IMR-90 (cell line): ENCODE measurements at regions of chr13 and their contacts with region 1.

Region 1: GRCh38 chr13:31733066-31733465 is 6.3 kb upstream of the RXFP2 start:
- DNase-seq: peak; percentile 40
- ATAC-seq: peak; percentile 49
- H3K4me3 ChIP-seq: 0 out of 2 replicates have a peak overlapping the region, but pooled peaks have one; percentile 10
- H3K27ac ChIP-seq: no peak overlapping the region
- H3K4me1 ChIP-seq: no peaks in the 10 kb centered on the region
- H3K27me3 ChIP-seq: peaks cover 5% of the 10 kb centered on the region; the same call in 1 of the 2 replicates
- CTCF ChIP-seq: no peak
- POLR2A ChIP-seq: no peak
- RAD21 ChIP-seq: no peak

Region 2: DNA sequence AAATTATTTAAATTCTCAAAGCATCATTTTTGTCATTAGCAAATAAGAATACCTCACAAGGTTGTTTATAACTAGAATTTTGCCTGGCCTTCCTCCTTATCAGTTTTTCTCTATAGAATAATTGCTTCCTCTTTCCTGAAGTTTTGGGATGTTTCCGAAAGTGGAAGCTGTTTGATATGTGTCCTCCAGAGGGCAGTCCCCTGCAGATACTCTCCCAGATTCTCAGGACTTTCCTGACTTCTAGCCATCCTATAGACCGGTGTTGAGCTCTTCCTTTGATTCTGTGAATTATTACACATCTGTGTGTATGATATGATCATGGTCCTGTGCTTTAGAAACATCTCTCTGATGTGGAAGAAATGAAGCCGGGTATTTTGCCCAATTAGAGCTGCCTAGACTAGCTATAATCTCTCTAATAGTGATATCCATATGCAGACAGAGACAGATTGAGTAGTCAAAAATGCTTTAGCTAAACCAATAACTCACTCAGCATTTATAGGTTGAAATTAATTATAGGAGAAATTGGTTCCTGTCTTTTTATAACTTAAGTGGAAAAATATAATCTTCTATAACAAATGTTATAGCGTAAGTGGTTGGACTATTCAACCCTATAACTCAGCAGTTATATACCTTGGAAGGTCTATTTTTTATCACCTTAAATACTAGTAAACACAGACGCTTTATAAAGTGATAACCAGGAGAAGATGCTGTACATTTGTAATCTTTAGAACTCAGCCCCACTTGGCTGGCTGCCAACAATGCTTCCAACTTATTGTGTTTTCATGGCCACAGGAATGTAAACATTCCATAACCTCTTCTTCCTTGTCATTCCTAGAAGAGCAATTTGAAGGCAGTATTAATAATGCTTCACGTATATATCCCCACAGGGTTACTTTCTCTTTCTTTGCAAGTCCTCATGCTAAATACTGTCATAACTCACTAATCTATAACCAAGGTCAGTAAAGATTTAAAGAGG is 194.7 kb before region 1 on chr13:
- CTCF ChIA-PET with region 1: no interaction called
- POLR2A ChIA-PET with region 1: no interaction called
- dilution Hi-C with region 1: no loop called
- in situ Hi-C with region 1: loop called (anchors 10 kb)
- intact Hi-C with region 1: no loop called
- DNase-seq: peak; percentile 45
- ATAC-seq: peak; percentile 87
- H3K4me3 ChIP-seq: no peak overlapping the region
- H3K27ac ChIP-seq: no peak overlapping the region
- H3K4me1 ChIP-seq: no peaks in the 10 kb centered on the region
- H3K27me3 ChIP-seq: no peaks in the 10 kb centered on the region; the same call in 1 of the 2 replicates
- CTCF ChIP-seq: peak; percentile 58
- POLR2A ChIP-seq: no peak
- RAD21 ChIP-seq: peak; percentile 62

Region 3: GRCh38 chr13:31649766-31650165 is 83.3 kb before region 1 on chr13:
- CTCF ChIA-PET with region 1: no interaction called
- POLR2A ChIA-PET with region 1: no interaction called
- dilution Hi-C with region 1: no loop called
- in situ Hi-C with region 1: no loop called
- intact Hi-C with region 1: loop called (anchors 10 kb)
- DNase-seq: no peak
- ATAC-seq: no peak
- H3K4me3 ChIP-seq: no peak overlapping the region
- H3K27ac ChIP-seq: no peak overlapping the region
- H3K4me1 ChIP-seq: no peaks in the 10 kb centered on the region
- H3K27me3 ChIP-seq: no peaks in the 10 kb centered on the region; the same call in 1 of the 2 replicates
- CTCF ChIP-seq: no peak
- POLR2A ChIP-seq: no peak
- RAD21 ChIP-seq: no peak

Region 4: DNA sequence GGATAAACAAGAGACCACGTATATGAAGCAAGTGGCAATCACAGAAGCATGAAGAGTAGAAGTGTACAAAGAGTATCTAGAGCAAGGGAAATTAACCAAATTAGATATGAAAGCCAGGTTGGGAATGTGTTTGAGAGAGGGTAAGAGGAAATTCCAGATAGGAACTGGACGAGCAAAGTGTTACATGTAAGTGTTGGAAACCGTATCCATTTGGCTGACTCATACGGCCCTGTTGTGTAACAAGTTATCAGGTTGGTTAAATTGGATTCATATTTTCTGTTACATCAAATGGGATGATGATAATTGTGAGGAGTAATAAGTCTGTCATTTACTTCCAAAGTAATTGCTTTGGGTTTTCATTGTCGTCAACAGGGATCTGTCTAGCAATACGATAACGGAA is 52.9 kb after region 1 on chr13:
- CTCF ChIA-PET with region 1: no interaction called
- POLR2A ChIA-PET with region 1: no interaction called
- dilution Hi-C with region 1: no loop called
- in situ Hi-C with region 1: no loop called
- intact Hi-C with region 1: no loop called
- DNase-seq: no peak
- ATAC-seq: no peak
- H3K4me3 ChIP-seq: no peak overlapping the region
- H3K27ac ChIP-seq: no peak overlapping the region
- H3K4me1 ChIP-seq: no peaks in the 10 kb centered on the region
- H3K27me3 ChIP-seq: peaks cover 1% of the 10 kb centered on the region; the same call in 1 of the 2 replicates
- CTCF ChIP-seq: no peak
- POLR2A ChIP-seq: no peak
- RAD21 ChIP-seq: no peak